BJ (cell line): ENCODE measurements at regions of chr1 and their contacts with region 1.

Region 1: GRCh38 chr1:220926146-220926545 is 46.9 kb downstream of the HLX start:
- DNase-seq: peak; percentile 71
- H3K4me3 ChIP-seq: no peak overlapping the region
- H3K27me3 ChIP-seq: no peaks in the 10 kb centered on the region
- CTCF ChIP-seq: no peak

Region 2: GRCh38 chr1:220943319-220943996 is 17.3 kb after region 1 on chr1:
- CTCF ChIA-PET with region 1: interaction called, 15 read pairs
- POLR2A ChIA-PET with region 1: no interaction called
- DNase-seq: no peak
- H3K4me3 ChIP-seq: no peak overlapping the region
- H3K27me3 ChIP-seq: no peaks in the 10 kb centered on the region
- CTCF ChIP-seq: no peak

Region 3: DNA sequence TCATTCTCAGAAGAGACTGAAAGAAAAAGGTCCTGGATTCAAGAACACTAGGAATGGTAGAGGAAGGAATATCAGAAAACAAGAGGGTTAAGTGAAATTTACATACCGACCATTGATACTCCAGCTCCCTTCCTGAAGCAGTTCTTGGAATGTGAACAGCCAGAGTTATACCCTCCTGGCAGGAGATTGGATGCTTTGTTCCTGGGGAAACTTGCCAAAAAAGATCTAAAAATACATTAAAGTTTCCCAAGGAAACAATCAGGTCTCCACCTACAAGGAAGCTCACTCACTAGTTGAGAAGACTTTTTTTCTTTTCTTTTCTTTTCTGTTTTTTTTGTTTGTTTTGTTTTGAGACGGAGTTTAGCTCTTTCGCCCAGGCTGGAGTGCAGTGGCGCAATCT is 44.2 kb after region 1 on chr1:
- CTCF ChIA-PET with region 1: no interaction called
- POLR2A ChIA-PET with region 1: no interaction called
- DNase-seq: no peak
- H3K4me3 ChIP-seq: no peak overlapping the region
- H3K27me3 ChIP-seq: no peaks in the 10 kb centered on the region
- CTCF ChIP-seq: no peak